WTC11 (cell line): ENCODE measurements at regions of chr4 and their contacts with region 1.

Region 1: GRCh38 chr4:25654971-25655963 is at the start of gene SLC34A2:
- DNase-seq: peak; percentile 85
- ATAC-seq: peak; percentile 71
- H3K4me3 Mint-ChIP-seq: peak within 1 kb of the TSS; percentile 66
- H3K27ac Mint-ChIP-seq: no peak within 1 kb of the TSS
- H3K4me1 Mint-ChIP-seq: peaks cover 26% of the 10 kb centered on the region
- H3K27me3 Mint-ChIP-seq: peaks cover 47% of the 10 kb centered on the region
- CTCF ChIP-seq: no peak
- total RNA-seq, gene SLC34A2: 1.7 to 1.9 TPM (median 1.8 TPM) in 3 replicates

Region 2: GRCh38 chr4:25608644-25609043 is 46.6 kb before region 1 on chr4:
- CTCF ChIA-PET with region 1: no interaction called
- POLR2A ChIA-PET with region 1: no interaction called
- DNase-seq: no peak
- ATAC-seq: no peak
- H3K4me3 Mint-ChIP-seq: no peak overlapping the region
- H3K27ac Mint-ChIP-seq: no peak overlapping the region
- H3K4me1 Mint-ChIP-seq: no peaks in the 10 kb centered on the region
- H3K27me3 Mint-ChIP-seq: peaks cover 2% of the 10 kb centered on the region; the same call in 1 of the 2 replicates
- CTCF ChIP-seq: no peak

Region 3: GRCh38 chr4:25667931-25668557 is 12.8 kb after region 1 on chr4:
- CTCF ChIA-PET with region 1: interaction called, 14 read pairs
- POLR2A ChIA-PET with region 1: no interaction called
- DNase-seq: peak; percentile 29
- ATAC-seq: peak; percentile 49
- H3K4me3 Mint-ChIP-seq: no peak overlapping the region
- H3K27ac Mint-ChIP-seq: no peak overlapping the region; the same call in 1 of the 2 replicates
- H3K4me1 Mint-ChIP-seq: peaks cover 14% of the 10 kb centered on the region
- H3K27me3 Mint-ChIP-seq: no peaks in the 10 kb centered on the region
- CTCF ChIP-seq: no peak

Region 4: GRCh38 chr4:25710637-25711036 is 55.4 kb after region 1 on chr4:
- CTCF ChIA-PET with region 1: no interaction called
- POLR2A ChIA-PET with region 1: no interaction called
- DNase-seq: no peak
- ATAC-seq: peak; percentile 57
- H3K4me3 Mint-ChIP-seq: no peak overlapping the region
- H3K27ac Mint-ChIP-seq: no peak overlapping the region
- H3K4me1 Mint-ChIP-seq: no peaks in the 10 kb centered on the region
- H3K27me3 Mint-ChIP-seq: no peaks in the 10 kb centered on the region
- CTCF ChIP-seq: no peak